ENCODE measurements at regions of chr17 and their contacts with region 1.

Region 1: DNA sequence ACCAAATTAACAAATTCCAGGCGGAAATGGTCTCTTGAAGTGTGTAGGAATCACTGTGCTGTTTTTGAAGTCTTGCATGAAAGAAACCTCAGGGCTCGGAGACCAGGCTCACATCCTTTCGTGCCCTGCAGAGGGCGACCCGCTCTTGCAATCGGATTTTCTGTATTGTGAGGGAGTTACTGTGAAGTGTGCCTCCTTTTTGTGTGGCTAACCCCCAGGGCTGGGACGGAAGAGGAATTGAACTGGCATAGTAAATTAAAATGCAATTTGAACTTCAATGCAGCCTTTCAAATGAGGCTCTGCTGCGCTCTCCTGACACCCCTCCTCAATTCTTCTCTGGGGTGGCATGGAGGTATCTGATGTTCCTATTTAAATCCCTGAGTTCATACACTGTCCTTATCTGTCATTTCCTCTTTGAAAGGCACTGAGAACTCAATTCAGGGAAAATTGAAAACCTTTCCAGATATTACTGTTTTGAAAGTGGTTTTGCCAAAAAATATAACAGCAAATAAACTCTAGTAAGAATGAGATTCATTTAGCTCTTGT is 51.5 kb upstream of the MGAT5B start:
- ATAC-seq: peak; percentile 87 to 96 (median 90)
- H3K4me3 ChIP-seq: no peak overlapping the region
- H3K27ac ChIP-seq: no peak overlapping the region
- H3K4me1 ChIP-seq: no peaks in the 10 kb centered on the region

Region 2: DNA sequence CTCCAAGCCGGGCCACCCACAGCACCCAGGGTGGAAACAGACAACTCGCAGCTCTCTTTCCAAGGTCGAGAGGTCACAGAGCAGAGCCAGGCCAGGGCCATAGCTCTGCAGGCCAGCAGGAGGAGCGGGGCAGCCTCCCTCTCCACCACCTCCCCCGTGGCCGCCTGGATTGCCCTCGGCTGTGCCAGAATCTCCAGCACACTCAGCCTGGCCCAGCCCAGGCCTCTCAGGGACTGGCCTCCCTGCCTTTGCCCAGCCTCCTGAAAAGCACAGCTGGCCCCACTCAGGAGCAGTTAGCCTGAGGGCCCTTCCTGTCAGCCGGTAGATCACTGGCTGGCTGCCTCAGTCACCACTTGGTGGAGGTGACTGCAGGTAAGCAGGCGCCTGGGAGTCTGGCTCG is 238.3 kb after region 1 on chr17:
- in situ Hi-C with region 1: loop called in 1 of 9 experiments (anchors 25 kb)
- ATAC-seq: peak in 3 of 8 experiments; percentile 7 to 57 (median 18)
- H3K4me3 ChIP-seq: no peak overlapping the region
- H3K27ac ChIP-seq: no peak overlapping the region
- H3K4me1 ChIP-seq: peaks cover 10 to 20% of the 10 kb centered on the region in 2 donors

Measured in motor neuron (in vitro differentiated cells).